ENCODE measurements at regions of chr12 and their contacts with region 1.

Region 1: DNA sequence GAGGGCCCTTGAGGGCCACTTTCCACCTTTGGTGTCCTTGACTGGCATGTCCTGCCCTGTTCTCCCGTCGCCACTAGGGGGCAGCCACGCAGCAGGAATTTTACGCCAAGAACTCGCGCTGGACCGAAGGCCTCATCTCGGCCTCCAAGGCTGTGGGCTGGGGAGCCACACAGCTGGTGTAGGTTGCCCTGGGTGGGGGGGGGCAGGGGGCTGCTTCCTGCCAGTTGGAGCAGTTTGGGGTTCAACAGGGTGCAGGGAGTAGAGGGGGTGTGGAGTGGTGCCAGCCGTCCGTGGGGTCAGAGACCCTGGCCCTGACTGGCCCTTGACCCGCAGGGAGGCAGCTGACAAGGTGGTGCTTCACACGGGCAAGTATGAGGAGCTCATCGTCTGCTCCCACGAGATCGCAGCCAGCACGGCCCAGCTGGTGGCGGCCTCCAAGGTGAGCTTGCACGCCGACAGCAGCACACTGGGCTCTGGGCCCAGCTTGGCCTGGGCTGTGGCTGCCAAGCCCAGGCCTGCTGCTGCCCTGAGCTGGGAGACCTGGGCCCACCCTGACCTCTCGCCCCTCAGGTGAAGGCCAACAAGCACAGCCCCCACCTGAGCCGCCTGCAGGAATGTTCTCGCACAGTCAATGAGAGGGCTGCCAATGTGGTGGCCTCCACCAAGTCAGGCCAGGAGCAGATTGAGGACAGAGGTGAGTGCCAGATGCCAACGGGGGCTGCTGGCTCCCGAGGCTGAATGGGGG is 25.3 kb downstream of the HIP1R start:
- DNase-seq: peak; percentile 87
- ATAC-seq: peak; percentile 74
- H3K4me3 Mint-ChIP-seq: no peak overlapping the region
- H3K27ac Mint-ChIP-seq: peak overlapping the region; percentile 25
- H3K4me1 Mint-ChIP-seq: peaks cover 7% of the 10 kb centered on the region
- H3K27me3 Mint-ChIP-seq: no peaks in the 10 kb centered on the region

Region 2: GRCh38 chr12:122740351-122740750 is 120.2 kb before region 1 on chr12:
- CTCF ChIA-PET with region 1: no interaction called
- POLR2A ChIA-PET with region 1: no interaction called
- DNase-seq: no peak
- ATAC-seq: no peak
- H3K4me3 Mint-ChIP-seq: no peak overlapping the region
- H3K27ac Mint-ChIP-seq: no peak overlapping the region
- H3K4me1 Mint-ChIP-seq: peaks cover 12% of the 10 kb centered on the region
- H3K27me3 Mint-ChIP-seq: no peaks in the 10 kb centered on the region

Region 3: DNA sequence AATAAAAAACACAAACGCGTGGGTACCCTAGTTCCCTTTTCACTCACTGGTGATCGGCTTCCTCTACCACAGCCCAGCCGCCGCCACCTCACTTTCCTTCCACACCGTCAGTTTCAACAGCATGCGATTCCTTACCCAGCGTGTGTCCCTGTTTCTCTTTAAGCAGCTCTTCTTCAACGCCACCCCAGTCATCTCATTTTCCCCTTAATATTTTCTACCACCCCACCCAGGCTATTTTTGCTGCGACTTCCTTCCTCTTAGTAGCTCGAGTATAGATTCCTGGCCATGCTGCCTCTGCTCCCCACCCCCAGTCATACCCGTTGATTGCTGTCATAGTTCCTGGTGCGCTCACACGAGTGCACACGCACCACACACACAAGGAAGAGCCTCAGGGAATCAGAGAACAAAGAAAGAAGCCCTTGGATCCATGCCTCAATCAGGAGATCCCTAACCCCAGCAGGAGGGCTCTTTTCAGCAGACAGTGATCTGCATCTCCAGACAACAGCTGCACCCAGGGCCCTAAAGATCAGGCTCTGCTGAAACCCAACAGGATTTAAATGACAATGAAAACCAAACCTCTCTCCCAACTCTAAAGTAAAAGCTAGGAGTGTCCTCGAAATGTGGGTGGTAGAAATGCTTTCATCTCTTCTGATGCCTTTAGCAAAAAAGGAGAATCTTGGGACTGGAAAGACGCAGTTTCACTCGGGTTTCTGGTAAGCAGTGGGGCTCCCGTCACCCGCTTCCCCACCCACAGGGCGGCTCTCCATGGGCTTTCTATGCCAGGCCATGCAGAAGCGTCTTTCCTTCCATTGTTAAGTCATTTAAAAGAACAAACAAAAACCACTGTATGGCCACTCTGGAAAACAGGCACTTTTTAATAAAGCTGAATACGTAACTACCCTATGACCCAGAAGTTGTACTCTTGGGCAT is 11.6 kb after region 1 on chr12:
- CTCF ChIA-PET with region 1: interaction called, 29 read pairs
- POLR2A ChIA-PET with region 1: no interaction called
- DNase-seq: peak; percentile 66
- ATAC-seq: peak; percentile 59
- H3K4me3 Mint-ChIP-seq: peak overlapping the region; percentile 65
- H3K27ac Mint-ChIP-seq: peak overlapping the region; percentile 81
- H3K4me1 Mint-ChIP-seq: peaks cover 64% of the 10 kb centered on the region
- H3K27me3 Mint-ChIP-seq: no peaks in the 10 kb centered on the region

Region 4: DNA sequence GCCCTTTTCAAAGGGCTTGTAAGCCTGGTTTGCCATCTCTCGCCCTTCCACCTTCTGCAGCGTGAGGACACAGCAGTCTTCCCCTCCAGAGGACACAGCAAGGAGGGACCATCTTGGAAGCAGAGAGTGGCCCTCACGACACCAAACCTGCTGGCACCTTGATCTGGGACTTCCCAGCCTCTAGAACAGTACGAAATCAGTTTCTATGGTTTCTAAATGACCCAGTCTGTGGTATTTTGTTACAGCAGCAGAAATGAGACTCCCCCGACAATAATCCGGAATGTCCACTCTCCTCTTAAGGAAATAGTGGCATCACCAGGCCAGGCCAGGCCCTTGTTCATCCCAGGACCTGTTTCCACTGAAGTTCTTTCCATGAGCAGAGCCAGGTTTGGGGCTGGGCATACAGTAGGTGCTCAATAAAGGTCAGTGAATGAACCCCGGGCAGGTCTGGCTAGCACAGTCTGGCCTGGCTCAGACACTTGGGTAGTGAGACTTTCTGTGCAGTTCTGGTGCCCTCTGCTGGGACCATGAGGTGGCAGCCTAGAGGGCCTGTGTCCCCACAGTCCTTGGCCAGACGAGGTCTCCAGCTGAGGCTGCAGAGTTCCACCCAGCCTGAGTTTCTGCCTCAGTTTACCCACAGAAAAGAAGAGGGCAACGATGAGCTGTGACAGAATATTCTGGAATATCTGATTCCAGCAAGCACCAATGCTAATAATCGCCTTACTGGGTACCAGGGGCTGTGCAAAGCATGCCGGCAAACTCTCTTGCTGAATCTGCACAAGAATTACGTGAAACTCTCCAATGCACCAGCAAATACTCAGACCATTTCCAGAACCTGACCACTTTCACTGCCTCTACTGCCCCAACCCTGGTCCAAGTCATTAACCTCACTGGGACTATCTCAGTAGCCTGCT is 91.7 kb after region 1 on chr12:
- CTCF ChIA-PET with region 1: interaction called, 204 read pairs
- POLR2A ChIA-PET with region 1: interaction called, 4 read pairs
- DNase-seq: peak; percentile 83
- ATAC-seq: peak; percentile 98
- H3K4me3 Mint-ChIP-seq: no peak overlapping the region
- H3K27ac Mint-ChIP-seq: no peak overlapping the region
- H3K4me1 Mint-ChIP-seq: peaks cover 14% of the 10 kb centered on the region
- H3K27me3 Mint-ChIP-seq: no peaks in the 10 kb centered on the region

Measured in activated CD8-positive, alpha-beta T cell treated with anti-CD3 and anti-CD28 coated beads, Interleukin-2, amount 10 ng/mL, durations not matched to agents 7 days and 5 days (primary cell).